Prostate gland (tissue), 2 donors: ENCODE measurements at regions of chr7 and their contacts with region 1.

Region 1: DNA sequence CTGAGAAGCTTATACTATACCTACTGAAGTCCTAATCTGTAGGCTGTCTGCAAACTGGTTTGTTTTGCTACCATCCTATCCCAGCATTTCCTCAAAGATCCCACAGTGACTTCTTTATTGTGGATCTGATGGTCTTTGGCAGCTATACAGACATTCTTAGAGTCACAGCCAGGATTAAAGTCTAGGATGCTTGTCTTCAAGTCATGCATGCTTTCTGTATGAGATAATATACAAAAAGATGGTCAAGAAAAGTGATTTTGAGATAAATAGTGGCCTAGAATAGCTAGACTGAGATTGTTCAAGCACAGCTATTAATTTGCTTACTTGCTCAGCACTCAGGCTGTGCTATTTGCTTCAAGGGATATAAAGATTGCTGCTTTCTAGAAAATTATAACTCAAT is 454.4 kb downstream of the AUTS2 start:
- DNase-seq: no peak
- H3K4me3 ChIP-seq: no peak overlapping the region
- H3K27ac ChIP-seq: no peak overlapping the region
- H3K4me1 ChIP-seq: no peaks in the 10 kb centered on the region
- H3K27me3 ChIP-seq: no peaks in the 10 kb centered on the region
- CTCF ChIP-seq: no peak
- POLR2A ChIP-seq: no peak

Region 2: DNA sequence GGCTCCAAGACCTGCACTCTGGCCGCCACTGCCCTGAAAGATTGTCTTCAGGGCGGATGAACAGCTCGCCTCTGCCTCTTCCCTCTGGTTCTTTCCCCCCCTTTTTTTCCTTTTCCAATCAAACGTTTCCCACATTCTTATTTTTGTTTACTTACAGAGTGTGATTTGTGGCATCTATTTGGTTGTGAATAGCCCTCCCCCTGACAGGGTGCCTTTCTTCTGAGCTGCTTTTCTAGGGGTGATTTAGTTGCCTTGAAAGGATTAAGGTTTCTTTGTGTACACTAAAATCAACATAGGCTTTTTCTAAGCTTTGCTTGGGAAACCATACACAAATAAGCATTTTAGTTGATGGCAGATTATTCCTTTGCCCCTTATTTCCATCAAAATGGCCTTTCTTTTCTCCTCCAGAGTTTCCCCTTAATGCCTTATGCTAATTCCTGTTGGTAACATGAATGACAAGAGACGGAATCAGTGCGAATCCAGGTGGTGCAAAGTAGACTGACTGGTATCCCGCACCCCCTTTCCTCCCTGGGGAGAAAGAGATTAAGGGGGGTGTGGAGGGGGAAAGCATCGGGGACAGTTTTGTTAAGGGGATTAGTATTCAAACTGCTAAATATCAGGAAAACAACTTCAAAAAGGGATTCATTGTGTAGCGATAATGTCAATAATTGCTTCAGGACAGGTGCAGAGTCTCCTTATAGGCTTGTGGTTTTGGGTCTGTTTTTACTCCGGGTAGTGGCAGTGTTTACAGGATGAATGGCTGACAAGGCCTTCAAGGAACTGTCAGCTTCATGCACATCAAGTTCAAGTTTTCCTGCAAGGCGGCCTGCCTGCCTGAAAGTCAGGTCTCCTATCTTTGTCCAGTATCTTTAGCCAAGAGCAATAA is 647.6 kb after region 1 on chr7:
- intact Hi-C with region 1: loop called (anchors 5 kb)
- DNase-seq: no peak
- H3K4me3 ChIP-seq: no peak overlapping the region
- H3K27ac ChIP-seq: no peak overlapping the region
- H3K4me1 ChIP-seq: peaks cover 4% of the 10 kb centered on the region
- H3K27me3 ChIP-seq: no peaks in the 10 kb centered on the region
- CTCF ChIP-seq: no peak
- POLR2A ChIP-seq: no peak